ENCODE measurements at regions of chr6 and their contacts with region 1.

Region 1: DNA sequence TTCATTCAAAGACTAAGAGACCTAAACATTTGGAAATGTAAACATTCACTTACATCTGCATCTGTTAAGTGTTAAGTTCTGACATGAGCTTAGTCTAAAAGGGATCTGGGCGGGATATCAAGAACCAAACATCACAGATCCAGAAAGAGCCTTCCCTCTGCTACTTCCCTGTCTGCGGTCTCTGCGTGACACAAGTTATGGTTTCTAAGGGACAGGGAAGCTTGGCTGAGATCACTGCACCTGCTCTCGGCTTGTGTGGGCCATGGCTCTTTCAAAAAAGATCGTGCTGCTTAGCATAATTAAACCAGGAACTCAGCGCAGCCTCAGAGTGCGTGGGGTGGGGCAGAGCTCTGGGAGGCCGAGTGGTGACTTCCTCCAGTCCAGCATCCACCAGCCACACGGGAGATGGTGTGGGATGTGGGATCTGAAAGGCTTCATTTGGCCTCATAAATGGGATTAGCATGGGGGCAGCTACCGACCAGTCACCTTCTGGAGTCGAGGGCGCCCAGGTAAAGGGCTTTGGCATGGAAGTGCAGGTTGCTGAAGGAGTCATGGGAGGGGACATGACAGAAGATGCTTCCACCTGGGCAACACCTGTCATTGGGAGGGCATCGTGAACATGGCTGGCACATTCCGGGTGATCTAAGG is 16.7 kb upstream of the RAMACL start:
- DNase-seq: peak in 1 of 10 donors; percentile 61

Region 2: GRCh38 chr6:166556871-166557322 is 46.3 kb before region 1 on chr6:
- intact Hi-C with region 1: loop called (anchors 10 kb)
- DNase-seq: peak; percentile 77 to 97 (median 86)

Measured in posterior cingulate gyrus (tissue), 11 donors.